IMR-90 (cell line): ENCODE measurements at regions of chr20 and their contacts with region 1.

Region 1: GRCh38 chr20:10313701-10314100 is 95.1 kb downstream of the SNAP25 start:
- DNase-seq: peak; percentile 20
- ATAC-seq: peak; percentile 30
- H3K4me3 ChIP-seq: no peak overlapping the region
- H3K27ac ChIP-seq: peak overlapping the region; percentile 79; the same call in 1 of the 2 replicates
- H3K4me1 ChIP-seq: peaks cover 24% of the 10 kb centered on the region
- H3K27me3 ChIP-seq: no peaks in the 10 kb centered on the region
- CTCF ChIP-seq: no peak
- POLR2A ChIP-seq: no peak
- RAD21 ChIP-seq: no peak

Region 2: DNA sequence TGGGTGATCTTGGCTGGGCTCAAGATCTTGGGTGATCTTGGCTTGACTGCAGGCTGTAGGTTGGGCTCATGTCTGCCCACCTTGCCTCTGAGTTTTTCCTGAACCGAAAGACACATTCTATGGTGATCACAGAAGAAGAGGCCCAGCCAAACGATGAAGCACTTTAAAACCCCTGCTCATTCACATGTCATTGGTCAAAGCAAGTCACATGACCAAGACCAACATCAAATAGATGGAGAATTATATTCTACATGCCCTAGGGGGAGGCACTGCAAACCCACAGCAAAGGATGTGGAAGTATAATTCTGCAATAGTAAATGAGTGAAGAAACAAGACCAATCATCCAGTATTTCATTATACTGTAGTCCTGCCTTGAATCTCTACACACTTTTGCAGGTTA is 171.1 kb before region 1 on chr20:
- CTCF ChIA-PET with region 1: no interaction called
- POLR2A ChIA-PET with region 1: no interaction called
- dilution Hi-C with region 1: no loop called
- in situ Hi-C with region 1: no loop called
- intact Hi-C with region 1: no loop called
- DNase-seq: no peak
- ATAC-seq: no peak
- H3K4me3 ChIP-seq: no peak overlapping the region
- H3K27ac ChIP-seq: no peak overlapping the region
- H3K4me1 ChIP-seq: no peaks in the 10 kb centered on the region
- H3K27me3 ChIP-seq: peaks cover 7% of the 10 kb centered on the region
- CTCF ChIP-seq: no peak
- POLR2A ChIP-seq: no peak
- RAD21 ChIP-seq: no peak

Region 3: DNA sequence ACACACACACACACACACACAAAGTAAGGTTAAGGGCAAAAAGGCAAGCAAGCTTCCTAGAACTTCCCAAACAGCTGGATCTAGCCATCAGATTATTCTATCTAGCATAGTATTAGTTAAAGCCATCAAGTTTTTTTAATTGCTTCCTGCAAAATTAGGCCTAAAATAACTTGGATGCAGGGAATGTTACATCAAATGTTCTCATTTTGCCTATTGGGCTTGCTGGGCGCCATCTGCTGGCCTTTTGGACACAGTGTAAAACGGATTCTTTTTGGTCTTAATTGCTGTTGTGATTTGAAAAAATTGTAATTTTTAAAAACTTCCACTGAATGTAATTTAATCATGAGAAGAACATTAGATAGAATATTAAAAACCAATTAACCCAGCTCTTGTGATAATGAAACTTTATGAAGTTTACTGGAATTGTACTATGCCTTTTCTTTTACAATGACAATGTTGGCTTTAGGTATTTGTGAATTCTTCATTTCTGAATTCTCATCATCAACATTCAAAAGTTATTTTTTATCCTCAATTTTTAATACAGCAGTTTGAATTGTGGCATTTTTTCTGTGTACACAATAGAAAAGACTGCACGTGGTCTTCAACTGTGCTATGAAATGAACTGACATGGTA is 113.5 kb after region 1 on chr20:
- CTCF ChIA-PET with region 1: interaction called, 3 read pairs
- POLR2A ChIA-PET with region 1: interaction called, 3 read pairs
- dilution Hi-C with region 1: no loop called
- in situ Hi-C with region 1: no loop called
- intact Hi-C with region 1: loop called (anchors 2 kb)
- DNase-seq: peak; percentile 74
- ATAC-seq: peak; percentile 81
- H3K4me3 ChIP-seq: no peak overlapping the region
- H3K27ac ChIP-seq: no peak overlapping the region
- H3K4me1 ChIP-seq: peaks cover 2% of the 10 kb centered on the region; the same call in 1 of the 2 replicates
- H3K27me3 ChIP-seq: no peaks in the 10 kb centered on the region
- CTCF ChIP-seq: peak; percentile 83
- POLR2A ChIP-seq: no peak
- RAD21 ChIP-seq: peak; percentile 83